ENCODE measurements at regions of chr9 and their contacts with region 1.

Region 1: GRCh38 chr9:35907711-35908503 is 1.4 kb upstream of the SPAAR start:
- DNase-seq: peak in 3 of 4 donors; percentile 40 to 73 (median 67)
- ATAC-seq: peak; percentile 63
- H3K4me3 ChIP-seq: no peak overlapping the region
- H3K27ac ChIP-seq: peak overlapping the region; percentile 91 to 95
- H3K4me1 ChIP-seq: peaks cover 54 to 81% of the 10 kb centered on the region in 2 donors
- H3K27me3 ChIP-seq: no peaks in the 10 kb centered on the region
- CTCF ChIP-seq: no peak

Region 2: DNA sequence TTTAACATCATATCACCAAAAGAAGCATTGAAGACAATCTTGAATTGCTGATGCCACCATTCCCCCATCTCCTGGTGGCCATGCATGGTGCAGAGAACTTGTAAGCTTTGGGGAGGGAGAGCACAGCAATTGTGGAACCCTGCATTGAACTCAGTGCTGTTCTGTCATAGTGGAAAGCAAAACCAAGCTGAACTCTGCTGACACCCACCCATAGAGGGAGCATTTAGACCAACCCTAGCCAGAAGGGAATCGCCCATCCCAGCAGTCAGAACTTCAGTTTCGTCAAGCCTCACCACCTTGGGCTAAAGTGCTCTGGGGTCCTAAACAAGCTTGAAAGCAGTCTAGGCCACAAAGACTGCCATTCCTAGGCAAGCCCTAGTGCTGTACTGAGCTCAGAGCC is 455.4 kb before region 1 on chr9:
- intact Hi-C with region 1: no loop called
- DNase-seq: no peak
- ATAC-seq: no peak
- H3K4me3 ChIP-seq: no peak overlapping the region
- H3K27ac ChIP-seq: no peak overlapping the region
- H3K4me1 ChIP-seq: no peaks in the 10 kb centered on the region
- H3K27me3 ChIP-seq: no peaks in the 10 kb centered on the region
- CTCF ChIP-seq: no peak

Region 3: DNA sequence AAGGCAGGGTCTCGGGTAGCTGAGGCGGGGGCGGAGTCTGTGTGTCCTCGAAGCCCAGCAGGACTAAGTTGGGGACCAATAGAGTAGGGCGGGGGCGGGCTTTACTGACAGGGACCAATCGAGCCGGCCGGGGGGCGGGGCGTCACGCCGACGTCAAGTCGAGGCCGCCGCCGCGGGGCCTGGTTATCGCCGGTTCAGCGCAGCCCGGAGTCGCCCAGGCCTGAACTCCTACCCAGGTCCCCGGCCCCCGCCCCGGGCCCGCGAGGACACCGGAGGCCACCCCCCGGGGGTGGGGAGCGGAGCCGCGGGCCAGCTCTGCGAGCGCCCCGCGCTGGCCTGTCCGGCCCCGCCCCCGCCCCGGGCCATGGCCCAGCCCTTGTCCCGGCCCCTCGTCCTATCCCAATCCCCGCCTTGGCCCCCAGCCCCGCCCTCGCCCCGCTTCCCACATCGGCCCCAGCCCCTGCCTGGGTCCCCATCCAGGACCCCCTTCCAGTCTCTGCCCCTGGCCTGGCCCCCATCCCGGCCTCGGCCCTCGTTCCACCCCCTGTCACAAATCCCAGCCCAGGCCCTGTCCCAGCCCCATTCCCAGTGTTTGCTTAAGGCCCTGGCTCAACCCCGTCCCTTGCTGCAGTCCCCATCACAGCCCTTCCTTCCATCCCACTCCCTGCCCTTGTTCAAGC is 78.7 kb before region 1 on chr9 and contains the start of gene TMEM8B:
- intact Hi-C with region 1: no loop called
- DNase-seq: peak; percentile 94 to 97 (median 96)
- ATAC-seq: peak; percentile 90
- H3K4me3 ChIP-seq: peak within 1 kb of the TSS; percentile 57 to 69
- H3K27ac ChIP-seq: peak within 1 kb of the TSS; percentile 82 to 90
- H3K4me1 ChIP-seq: peaks cover 6 to 31% of the 10 kb centered on the region in 2 donors
- H3K27me3 ChIP-seq: no peaks in the 10 kb centered on the region
- CTCF ChIP-seq: no peak
- polyA plus RNA-seq, gene TMEM8B: 25.3 to 30.7 (median 27.2) TPM

Region 4: GRCh38 chr9:35945341-35946018 is 37.6 kb after region 1 on chr9:
- intact Hi-C with region 1: loop called in 1 of 2 experiments (anchors 5 kb)
- DNase-seq: peak in 3 of 4 donors; percentile 53 to 81 (median 77)
- ATAC-seq: peak; percentile 61
- H3K4me3 ChIP-seq: no peak overlapping the region
- H3K27ac ChIP-seq: peak overlapping the region; percentile 31 to 47
- H3K4me1 ChIP-seq: peaks cover 8 to 16% of the 10 kb centered on the region in 2 donors
- H3K27me3 ChIP-seq: no peaks in the 10 kb centered on the region
- CTCF ChIP-seq: peak; percentile 65 to 72

Measured in left lung (tissue), 14 donors.